ENCODE measurements at regions of chr2 and their contacts with region 1.

Region 1: GRCh38 chr2:30280611-30281434 is 49.5 kb downstream of the LBH start:
- DNase-seq: no peak
- H3K4me3 ChIP-seq: no peak overlapping the region
- H3K27ac ChIP-seq: no peak overlapping the region
- H3K4me1 ChIP-seq: no peaks in the 10 kb centered on the region
- H3K27me3 ChIP-seq: no peaks in the 10 kb centered on the region
- CTCF ChIP-seq: no peak
- POLR2A ChIP-seq: no peak

Region 2: DNA sequence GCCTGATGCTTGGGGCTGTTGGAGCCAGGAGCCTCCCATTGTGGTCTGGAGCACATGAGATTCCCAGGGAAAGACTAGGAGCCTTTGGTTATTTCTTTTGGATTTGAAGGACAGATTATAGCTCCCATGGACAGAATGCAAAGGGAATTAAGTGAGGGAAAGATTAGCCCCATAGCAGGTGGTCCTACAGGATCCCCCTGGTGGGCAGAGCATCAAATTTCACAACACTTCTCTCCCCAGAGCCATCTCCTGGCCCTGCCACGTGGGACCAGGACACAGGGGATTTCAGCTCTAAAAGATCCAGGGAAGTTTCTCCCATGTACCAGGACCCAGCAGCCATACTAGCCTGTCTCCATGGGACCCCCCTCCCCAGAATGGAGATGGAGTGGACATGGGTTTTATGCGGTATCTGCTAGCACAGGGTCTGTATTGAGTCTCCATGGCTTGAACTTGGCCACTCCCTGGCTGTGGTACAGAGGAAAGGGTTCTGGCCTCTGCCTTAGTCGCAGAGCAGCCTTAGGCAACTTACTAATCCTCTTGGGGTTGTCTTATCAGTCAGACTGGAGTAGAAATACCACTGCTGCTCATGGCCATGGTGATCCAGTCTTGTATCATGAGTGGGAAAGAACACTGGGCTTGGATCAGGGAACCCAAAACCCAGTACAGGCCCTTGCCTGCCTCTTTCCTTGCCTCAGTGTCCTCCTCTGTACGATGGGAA is 1791.8 kb before region 1 on chr2:
- intact Hi-C with region 1: no loop called
- DNase-seq: no peak
- H3K4me3 ChIP-seq: no peak overlapping the region
- H3K27ac ChIP-seq: no peak overlapping the region
- H3K4me1 ChIP-seq: no peaks in the 10 kb centered on the region
- H3K27me3 ChIP-seq: no peaks in the 10 kb centered on the region
- CTCF ChIP-seq: no peak
- POLR2A ChIP-seq: no peak

Region 3: GRCh38 chr2:30245364-30245763 is 35.5 kb before region 1 on chr2:
- intact Hi-C with region 1: loop called (anchors 2 kb)
- DNase-seq: no peak
- H3K4me3 ChIP-seq: no peak overlapping the region
- H3K27ac ChIP-seq: no peak overlapping the region
- H3K4me1 ChIP-seq: no peaks in the 10 kb centered on the region
- H3K27me3 ChIP-seq: no peaks in the 10 kb centered on the region
- CTCF ChIP-seq: no peak
- POLR2A ChIP-seq: no peak

Region 4: GRCh38 chr2:30300456-30301221 is 19.8 kb after region 1 on chr2:
- intact Hi-C with region 1: no loop called
- DNase-seq: no peak
- H3K4me3 ChIP-seq: no peak overlapping the region
- H3K27ac ChIP-seq: peak overlapping the region in 1 of 2 donors; percentile 61
- H3K4me1 ChIP-seq: no peaks in the 10 kb centered on the region
- H3K27me3 ChIP-seq: no peaks in the 10 kb centered on the region
- CTCF ChIP-seq: no peak
- POLR2A ChIP-seq: no peak

Region 5: DNA sequence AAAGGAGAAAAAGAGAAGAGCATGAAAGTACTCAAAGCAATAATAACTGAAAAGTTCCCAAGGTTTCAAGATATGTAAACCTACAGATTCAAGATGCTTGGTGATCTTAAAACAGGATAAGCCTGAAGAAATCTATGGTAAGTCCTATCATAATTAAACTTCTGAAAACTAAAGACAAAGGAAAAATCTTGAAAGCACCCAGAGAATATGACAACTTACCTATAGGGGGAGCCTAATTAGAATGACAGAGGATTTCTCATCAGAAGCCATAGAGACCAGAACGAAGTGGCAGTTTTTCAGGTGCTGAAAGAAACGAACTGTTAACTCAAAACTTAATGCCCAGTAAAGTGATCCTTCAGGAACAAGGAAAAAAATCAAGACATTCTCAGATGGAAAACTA is 1074.0 kb after region 1 on chr2:
- intact Hi-C with region 1: no loop called
- DNase-seq: no peak
- H3K4me3 ChIP-seq: no peak overlapping the region
- H3K27ac ChIP-seq: no peak overlapping the region
- H3K4me1 ChIP-seq: no peaks in the 10 kb centered on the region
- H3K27me3 ChIP-seq: no peaks in the 10 kb centered on the region
- CTCF ChIP-seq: no peak
- POLR2A ChIP-seq: no peak

Measured in breast epithelium (tissue), 4 donors.